ENCODE measurements at regions of chr4 and their contacts with region 1.

Region 1: DNA sequence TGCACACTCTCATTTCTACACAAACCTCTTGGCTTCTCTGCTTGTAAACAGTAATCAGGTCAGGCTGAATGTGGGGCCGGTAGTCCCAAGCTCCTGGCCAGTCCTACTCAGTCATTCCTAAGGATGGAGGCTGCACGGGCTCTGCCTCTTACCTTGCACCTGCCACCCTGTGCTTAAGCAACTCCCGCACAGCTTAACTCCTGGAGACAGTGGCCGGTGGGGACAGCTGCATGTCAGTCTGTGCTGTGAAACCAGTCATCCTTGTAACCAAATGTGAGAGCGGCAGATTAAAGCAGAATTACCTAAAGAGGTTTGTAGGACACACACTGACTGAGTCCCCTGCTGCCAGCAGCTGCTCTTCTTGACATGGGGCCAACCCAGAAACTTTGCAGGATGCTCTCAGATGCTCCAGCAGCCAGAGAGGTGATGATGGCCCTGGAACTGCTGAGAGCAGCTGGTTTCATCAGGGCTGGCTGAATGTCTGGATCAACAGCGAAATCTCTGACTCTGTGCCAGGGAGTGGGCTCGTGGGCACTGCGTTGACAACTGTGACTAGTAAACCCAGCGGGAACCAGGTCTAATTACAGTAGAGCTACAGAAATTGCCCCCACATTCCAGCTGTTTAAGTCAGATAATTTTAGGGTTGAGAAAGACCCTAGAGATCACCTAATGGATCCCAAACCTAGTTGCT is 123.7 kb downstream of the ANAPC4 start:
- DNase-seq: peak; percentile 92
- H3K4me3 ChIP-seq: no peak overlapping the region
- H3K27ac ChIP-seq: peak overlapping the region; percentile 62
- H3K4me1 ChIP-seq: peaks cover 20% of the 10 kb centered on the region
- H3K27me3 ChIP-seq: no peaks in the 10 kb centered on the region
- CTCF ChIP-seq: no peak

Region 2: GRCh38 chr4:25439918-25440477 is 60.8 kb before region 1 on chr4:
- CTCF ChIA-PET with region 1: interaction called, 4 read pairs
- POLR2A ChIA-PET with region 1: no interaction called
- intact Hi-C with region 1: loop called (anchors 1 kb)
- DNase-seq: peak; percentile 88
- H3K4me3 ChIP-seq: no peak overlapping the region
- H3K27ac ChIP-seq: peak overlapping the region; percentile 32
- H3K4me1 ChIP-seq: peaks cover 14% of the 10 kb centered on the region
- H3K27me3 ChIP-seq: no peaks in the 10 kb centered on the region
- CTCF ChIP-seq: peak; percentile 90

Region 3: DNA sequence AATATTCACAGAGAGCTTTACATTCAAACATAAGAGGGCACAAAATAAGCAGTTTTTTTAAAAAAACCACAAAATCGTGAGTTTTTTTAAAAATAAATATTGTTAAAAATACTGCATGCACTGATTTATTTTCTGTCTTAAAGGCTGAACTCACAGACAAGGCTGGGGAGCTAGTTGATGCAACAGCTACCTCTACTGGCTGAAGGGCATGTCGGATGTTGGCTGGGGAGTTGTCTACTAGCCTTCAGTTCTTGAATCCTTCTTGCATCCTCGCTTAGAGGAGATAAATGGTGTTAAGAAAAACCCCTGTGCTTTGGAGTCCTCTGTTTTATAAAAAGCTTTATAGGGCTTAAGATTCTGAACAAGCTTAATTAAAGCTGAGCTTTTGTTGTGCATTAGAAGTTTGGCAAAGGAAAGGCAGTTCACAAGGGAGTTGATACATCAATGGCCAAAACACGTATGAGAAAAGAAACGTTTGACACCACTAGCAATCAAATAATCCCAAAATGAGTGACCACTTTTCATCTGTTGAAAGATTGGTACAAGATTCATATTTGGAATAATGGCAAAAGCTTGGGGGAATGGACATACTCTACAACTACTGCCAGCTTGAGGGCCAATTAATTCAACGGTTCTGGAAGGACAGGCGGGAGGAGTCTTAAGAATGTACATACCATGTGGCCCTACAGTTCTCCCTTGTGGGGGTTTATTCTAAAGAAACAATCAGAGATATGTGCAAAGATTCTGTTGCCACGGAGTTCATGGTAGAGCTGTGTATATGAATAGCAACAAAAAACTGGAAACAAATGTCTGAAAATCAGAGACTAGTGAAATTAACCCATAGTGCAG is 267.3 kb after region 1 on chr4:
- CTCF ChIA-PET with region 1: interaction called, 3 read pairs
- POLR2A ChIA-PET with region 1: interaction called, 15 read pairs
- intact Hi-C with region 1: loop called (anchors 10 kb)
- DNase-seq: peak; percentile 81
- H3K4me3 ChIP-seq: no peak overlapping the region
- H3K27ac ChIP-seq: peak overlapping the region; percentile 57
- H3K4me1 ChIP-seq: peaks cover 2% of the 10 kb centered on the region
- H3K27me3 ChIP-seq: no peaks in the 10 kb centered on the region
- CTCF ChIP-seq: peak; percentile 89

Region 4: DNA sequence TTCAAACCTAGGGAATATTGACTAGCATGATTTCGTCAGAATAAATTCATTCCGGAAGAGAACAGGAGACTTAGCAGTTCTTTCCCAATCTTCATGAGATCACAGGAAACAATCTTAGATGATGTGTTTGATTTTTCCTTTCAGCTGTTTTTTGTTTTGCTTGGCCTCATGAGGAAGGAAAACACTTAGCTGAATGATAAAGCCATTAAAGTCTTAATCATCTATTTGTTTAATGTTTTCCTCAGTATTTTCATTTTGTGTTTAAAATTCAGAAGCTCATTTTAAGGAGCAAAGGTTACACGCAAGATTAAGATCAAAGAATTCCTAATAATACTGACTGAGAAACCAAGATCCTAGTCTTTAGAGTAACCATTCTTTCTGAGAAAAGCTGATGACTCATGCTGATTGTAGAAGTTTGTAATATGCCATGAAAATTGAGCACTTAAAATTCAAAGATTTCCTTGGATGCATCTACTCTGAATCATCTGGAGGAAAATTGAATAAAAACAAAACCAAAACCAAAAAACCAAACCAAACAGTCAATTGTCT is 1067.7 kb after region 1 on chr4:
- CTCF ChIA-PET with region 1: no interaction called
- POLR2A ChIA-PET with region 1: interaction called, 16 read pairs
- intact Hi-C with region 1: no loop called
- DNase-seq: peak; percentile 96
- H3K4me3 ChIP-seq: no peak overlapping the region
- H3K27ac ChIP-seq: peak overlapping the region; percentile 44
- H3K4me1 ChIP-seq: peaks cover 40% of the 10 kb centered on the region
- H3K27me3 ChIP-seq: no peaks in the 10 kb centered on the region
- CTCF ChIP-seq: no peak